Activated B cell treated with CpG ODN at 0.5 μM for 24 hours (primary cell): ENCODE measurements at regions of chr12 and their contacts with region 1.

Region 1: GRCh38 chr12:12999959-13000615 is at the start of gene HEBP1:
- DNase-seq: peak; percentile 97
- ATAC-seq: peak; percentile 92
- H3K4me3 Mint-ChIP-seq: peak within 1 kb of the TSS; percentile 87
- H3K27ac Mint-ChIP-seq: peak within 1 kb of the TSS; percentile 84
- H3K4me1 Mint-ChIP-seq: peaks cover 27% of the 10 kb centered on the region
- H3K27me3 Mint-ChIP-seq: no peaks in the 10 kb centered on the region
- CTCF ChIP-seq: no peak
- total RNA-seq, gene HEBP1: 9.7 and 12.0 TPM in 2 replicates

Region 2: GRCh38 chr12:12786716-12787601 is 213.1 kb before region 1 on chr12:
- CTCF ChIA-PET with region 1: no interaction called
- POLR2A ChIA-PET with region 1: no interaction called
- intact Hi-C with region 1: loop called (anchors 2 kb)
- DNase-seq: peak; percentile 73
- ATAC-seq: peak; percentile 92
- H3K4me3 Mint-ChIP-seq: peak overlapping the region; percentile 87
- H3K27ac Mint-ChIP-seq: peak overlapping the region; percentile 86
- H3K4me1 Mint-ChIP-seq: peaks cover 23% of the 10 kb centered on the region
- H3K27me3 Mint-ChIP-seq: no peaks in the 10 kb centered on the region
- CTCF ChIP-seq: no peak

Region 3: DNA sequence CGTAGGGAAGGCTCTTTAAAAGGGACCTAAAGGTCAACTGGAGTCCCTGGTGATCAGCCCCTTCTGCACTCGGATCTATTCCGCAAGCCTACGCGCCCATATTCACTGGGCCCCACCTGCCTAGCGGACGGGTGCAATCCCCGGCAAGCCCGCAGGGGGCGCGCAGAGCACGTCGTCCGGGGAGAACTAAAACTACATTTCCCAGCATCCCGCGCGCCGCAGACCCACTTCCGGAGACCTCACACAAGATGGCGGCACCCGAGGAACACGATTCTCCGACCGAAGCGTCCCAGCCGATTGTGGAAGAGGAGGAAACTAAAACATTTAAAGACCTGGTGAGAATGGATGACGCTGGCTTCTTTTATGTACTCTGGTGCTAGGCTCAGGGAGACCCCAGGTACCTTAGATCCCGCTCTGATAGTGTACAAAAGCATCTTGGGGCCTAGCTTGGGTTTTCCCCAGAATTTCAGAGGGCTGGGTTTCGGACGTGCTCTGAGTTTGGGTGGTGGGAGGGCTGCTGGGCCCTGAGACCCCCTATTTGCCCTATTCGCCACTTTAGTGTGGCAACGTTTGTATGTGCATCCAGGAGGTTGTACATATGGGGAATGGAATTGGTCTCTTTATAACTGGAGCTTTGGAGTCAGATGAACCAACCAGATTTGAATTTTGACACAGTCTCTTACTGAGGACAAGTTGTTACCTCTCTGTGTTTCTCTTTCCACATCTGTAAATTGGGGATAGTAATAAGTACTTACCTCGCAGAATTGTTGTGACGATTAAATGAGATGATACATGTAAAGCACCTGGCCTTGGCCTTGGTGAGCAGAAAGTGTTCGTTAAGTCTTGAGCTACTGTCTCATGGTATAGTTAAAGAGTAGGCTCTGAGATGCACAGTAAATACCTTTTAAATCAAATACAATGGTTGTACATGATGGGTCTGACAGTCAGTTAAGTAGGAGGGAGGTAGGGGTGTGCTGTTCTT is 186.7 kb before region 1 on chr12 and contains the start of gene DDX47:
- CTCF ChIA-PET with region 1: no interaction called
- POLR2A ChIA-PET with region 1: interaction called, 4 read pairs
- intact Hi-C with region 1: loop called (anchors 1 kb)
- DNase-seq: peak; percentile 98
- ATAC-seq: peak; percentile 81
- H3K4me3 Mint-ChIP-seq: peak within 1 kb of the TSS; percentile 96
- H3K27ac Mint-ChIP-seq: peak within 1 kb of the TSS; percentile 93
- H3K4me1 Mint-ChIP-seq: peaks cover 69% of the 10 kb centered on the region
- H3K27me3 Mint-ChIP-seq: no peaks in the 10 kb centered on the region
- CTCF ChIP-seq: peak; percentile 87
- total RNA-seq, gene DDX47: 97.1 and 98.5 TPM in 2 replicates

Region 4: DNA sequence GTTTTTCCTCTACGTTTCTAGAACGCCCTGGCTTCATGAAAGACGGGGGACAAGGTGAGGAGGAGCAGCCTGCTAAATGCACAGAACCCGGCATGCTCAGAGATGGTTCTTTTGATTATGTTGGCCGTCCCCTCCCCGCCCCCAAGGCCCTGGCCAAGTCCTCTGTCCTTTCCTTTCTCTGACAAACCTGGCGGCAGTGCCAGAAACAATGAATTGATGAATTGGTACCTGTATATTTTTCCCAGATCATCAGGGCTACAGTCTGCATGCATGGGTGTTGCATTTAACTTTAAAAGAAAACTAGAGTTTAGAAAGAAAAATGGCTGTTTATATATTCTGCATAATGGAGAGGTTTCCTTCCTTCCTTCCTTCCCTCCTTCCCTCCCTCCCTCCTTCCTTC is 77.1 kb before region 1 on chr12:
- CTCF ChIA-PET with region 1: no interaction called
- POLR2A ChIA-PET with region 1: interaction called, 11 read pairs
- intact Hi-C with region 1: loop called (anchors 1 kb)
- DNase-seq: no peak
- ATAC-seq: no peak
- H3K4me3 Mint-ChIP-seq: no peak overlapping the region
- H3K27ac Mint-ChIP-seq: no peak overlapping the region
- H3K4me1 Mint-ChIP-seq: no peaks in the 10 kb centered on the region
- H3K27me3 Mint-ChIP-seq: peaks cover 11% of the 10 kb centered on the region
- CTCF ChIP-seq: no peak

Region 5: DNA sequence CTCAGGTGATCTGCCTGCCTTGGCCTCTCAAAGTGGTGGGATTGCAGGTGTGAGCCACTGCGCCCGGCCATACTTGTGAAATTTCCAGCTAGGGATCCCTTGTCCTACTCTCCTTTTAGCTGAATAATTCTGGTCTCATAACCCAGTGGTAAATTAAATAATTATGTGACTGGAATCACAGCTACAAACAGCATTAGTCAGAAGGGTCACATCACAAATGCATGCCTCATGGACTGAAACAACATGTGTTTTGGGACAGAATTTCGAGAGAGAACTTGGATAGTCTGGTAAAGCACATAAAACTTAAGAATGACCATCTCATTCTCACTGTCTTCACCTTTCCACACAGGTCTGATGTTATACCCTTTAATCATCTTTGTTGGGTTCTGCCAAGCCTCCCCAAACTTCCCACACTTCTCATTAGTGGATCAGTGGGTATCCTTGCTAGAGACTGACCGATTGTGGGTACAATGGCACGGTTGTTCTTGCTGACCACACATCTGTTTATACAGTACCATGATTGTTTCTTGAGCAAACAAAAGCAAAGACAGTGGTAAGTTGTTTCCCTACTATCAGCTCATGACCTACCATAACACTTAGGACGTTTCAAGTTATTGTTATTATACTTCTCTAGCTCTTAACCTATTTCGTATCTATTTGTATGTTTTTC is 53.3 kb before region 1 on chr12:
- CTCF ChIA-PET with region 1: no interaction called
- POLR2A ChIA-PET with region 1: no interaction called
- intact Hi-C with region 1: no loop called
- DNase-seq: no peak
- ATAC-seq: no peak
- H3K4me3 Mint-ChIP-seq: no peak overlapping the region
- H3K27ac Mint-ChIP-seq: no peak overlapping the region
- H3K4me1 Mint-ChIP-seq: no peaks in the 10 kb centered on the region
- H3K27me3 Mint-ChIP-seq: peaks cover 11% of the 10 kb centered on the region
- CTCF ChIP-seq: no peak

Region 6: DNA sequence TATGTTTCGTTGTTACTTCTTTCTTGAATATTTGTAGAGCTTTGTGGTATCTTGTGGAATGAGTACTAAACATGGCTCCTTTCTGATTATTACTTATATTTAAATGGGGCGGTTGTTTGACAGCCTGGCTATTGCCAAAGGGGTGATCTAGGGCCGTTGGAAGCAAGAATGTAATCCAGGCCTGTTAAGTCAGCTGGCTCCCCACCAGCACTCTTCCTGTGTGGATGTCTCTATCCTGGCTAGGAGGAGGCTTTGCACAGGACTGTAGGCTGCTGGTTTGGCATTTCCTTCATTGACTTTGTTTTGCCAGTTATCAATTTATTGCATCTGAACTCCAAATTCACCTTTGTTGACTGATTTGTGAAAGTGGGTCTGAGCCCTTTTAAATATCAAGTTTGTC is 49.7 kb after region 1 on chr12:
- CTCF ChIA-PET with region 1: no interaction called
- POLR2A ChIA-PET with region 1: no interaction called
- intact Hi-C with region 1: no loop called
- DNase-seq: no peak
- ATAC-seq: no peak
- H3K4me3 Mint-ChIP-seq: no peak overlapping the region
- H3K27ac Mint-ChIP-seq: no peak overlapping the region
- H3K4me1 Mint-ChIP-seq: peaks cover 3% of the 10 kb centered on the region
- H3K27me3 Mint-ChIP-seq: no peaks in the 10 kb centered on the region
- CTCF ChIP-seq: no peak

Region 7: DNA sequence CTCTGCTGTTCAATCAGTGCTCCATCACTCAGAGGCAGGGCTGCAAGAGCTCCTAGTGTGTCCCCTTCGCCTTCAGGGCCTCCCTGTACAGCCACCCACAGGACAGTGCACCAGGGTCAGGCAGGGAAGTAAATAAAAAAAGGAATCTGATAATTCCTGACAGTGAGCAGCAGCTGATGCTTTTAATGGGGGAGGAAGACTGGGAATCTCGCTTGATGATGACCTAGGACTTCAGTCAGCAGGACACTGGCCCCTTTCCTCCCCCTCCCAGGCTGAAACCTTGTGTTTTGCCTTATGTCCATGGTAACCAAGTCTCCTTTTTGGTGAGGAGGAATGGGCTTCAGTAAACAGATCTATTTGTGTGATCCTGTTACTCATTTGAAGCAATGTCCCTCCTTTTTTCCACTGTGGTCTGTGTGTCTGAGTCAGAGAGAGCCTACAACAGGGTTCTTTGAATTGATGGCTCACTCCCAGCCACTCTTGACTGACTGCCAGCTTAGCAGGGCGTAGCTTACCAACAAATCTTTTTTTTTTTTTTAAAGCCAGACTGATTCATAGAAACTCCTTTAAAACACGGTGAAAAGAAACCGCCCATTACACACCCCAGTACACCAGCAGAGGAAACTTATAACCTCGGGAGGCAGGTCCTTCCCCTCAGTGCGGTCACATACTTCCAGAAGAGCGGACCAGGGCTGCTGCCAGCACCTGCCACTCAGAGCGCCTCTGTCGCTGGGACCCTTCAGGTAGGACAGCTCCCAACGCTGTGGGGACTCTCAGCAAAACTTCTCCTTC is 196.2 kb after region 1 on chr12 and contains the start of gene EMP1:
- CTCF ChIA-PET with region 1: no interaction called
- POLR2A ChIA-PET with region 1: no interaction called
- intact Hi-C with region 1: loop called (anchors 1 kb)
- DNase-seq: peak; percentile 32
- ATAC-seq: peak; percentile 92
- H3K4me3 Mint-ChIP-seq: peak within 1 kb of the TSS; percentile 75
- H3K27ac Mint-ChIP-seq: peak within 1 kb of the TSS; percentile 50
- H3K4me1 Mint-ChIP-seq: peaks cover 31% of the 10 kb centered on the region
- H3K27me3 Mint-ChIP-seq: peaks cover 38% of the 10 kb centered on the region
- CTCF ChIP-seq: no peak
- total RNA-seq, gene EMP1: 0.39 TPM in 1 of 2 replicates, not detected in the other

Region 8: GRCh38 chr12:14157088-14157747 is 1157.1 kb after region 1 on chr12:
- CTCF ChIA-PET with region 1: no interaction called
- POLR2A ChIA-PET with region 1: no interaction called
- intact Hi-C with region 1: loop called (anchors 5 kb)
- DNase-seq: no peak
- ATAC-seq: peak; percentile 91
- H3K4me3 Mint-ChIP-seq: peak overlapping the region; percentile 62
- H3K27ac Mint-ChIP-seq: peak overlapping the region; percentile 97
- H3K4me1 Mint-ChIP-seq: peaks cover 71% of the 10 kb centered on the region
- H3K27me3 Mint-ChIP-seq: no peaks in the 10 kb centered on the region
- CTCF ChIP-seq: no peak